Thyroid gland (tissue), 4 donors: ENCODE measurements at regions of chr3 and their contacts with region 1.

Region 1: GRCh38 chr3:157493627-157494550 is 9.3 kb downstream of the VEPH1 start:
- DNase-seq: no peak
- H3K4me3 ChIP-seq: no peak overlapping the region
- H3K27ac ChIP-seq: no peak overlapping the region
- H3K4me1 ChIP-seq: peaks cover 15 to 55% of the 10 kb centered on the region in 2 donors
- H3K27me3 ChIP-seq: no peaks in the 10 kb centered on the region
- CTCF ChIP-seq: peak; percentile 21 to 69 (median 53)
- POLR2A ChIP-seq: no peak

Region 2: DNA sequence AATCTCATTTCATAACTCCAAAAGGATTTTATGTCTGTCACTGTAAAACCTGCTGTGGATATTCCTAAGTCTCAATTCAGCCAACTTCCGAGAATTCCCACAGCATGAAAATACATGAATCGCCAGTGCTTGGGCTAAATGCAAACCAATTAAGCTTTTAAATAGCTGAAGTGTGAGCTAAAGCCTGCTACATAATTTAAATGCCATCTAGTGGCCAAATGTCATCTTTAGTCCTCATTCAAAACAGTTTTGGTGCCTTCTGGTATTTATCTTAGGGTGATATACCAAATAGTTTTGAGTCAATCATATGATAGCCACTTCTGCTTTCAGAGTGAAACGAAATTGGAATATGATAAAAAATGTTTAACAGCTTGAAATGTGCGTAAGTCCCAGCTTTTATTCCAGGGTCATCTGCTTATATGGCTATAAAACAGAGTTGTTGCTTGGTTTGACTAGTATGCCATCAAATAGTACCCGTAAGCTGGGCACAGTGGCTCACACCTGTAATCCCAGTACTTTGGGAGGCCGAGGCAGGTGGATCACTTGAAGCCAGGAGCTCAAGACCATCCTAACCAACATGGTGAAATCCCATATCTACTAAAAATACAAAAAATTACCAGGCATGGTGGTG is 292.1 kb before region 1 on chr3:
- intact Hi-C with region 1: loop called (anchors 10 kb)
- DNase-seq: no peak
- H3K4me3 ChIP-seq: no peak overlapping the region
- H3K27ac ChIP-seq: no peak overlapping the region
- H3K4me1 ChIP-seq: peaks cover 0 to 6% of the 10 kb centered on the region in 2 donors
- H3K27me3 ChIP-seq: no peaks in the 10 kb centered on the region
- CTCF ChIP-seq: peak in 4 of 6 experiments; percentile 45 to 60 (median 54)
- POLR2A ChIP-seq: no peak